ENCODE measurements at regions of chr2 and their contacts with region 1.

Region 1: GRCh38 chr2:3571284-3571683 is 3.8 kb upstream of the RPS7 start:
- DNase-seq: no peak
- H3K4me3 ChIP-seq: no peak overlapping the region
- H3K27ac ChIP-seq: no peak overlapping the region
- H3K4me1 ChIP-seq: peaks cover 0 to 6% of the 10 kb centered on the region in 2 donors
- H3K27me3 ChIP-seq: no peaks in the 10 kb centered on the region
- CTCF ChIP-seq: no peak
- POLR2A ChIP-seq: no peak

Region 2: GRCh38 chr2:3449086-3449485 is 122.2 kb before region 1 on chr2:
- intact Hi-C with region 1: no loop called
- DNase-seq: peak in 1 of 7 donors; percentile 49
- H3K4me3 ChIP-seq: no peak overlapping the region
- H3K27ac ChIP-seq: peak overlapping the region in 2 of 5 donors; percentile 48 to 57
- H3K4me1 ChIP-seq: peaks cover 0 to 4% of the 10 kb centered on the region in 2 donors
- H3K27me3 ChIP-seq: no peaks in the 10 kb centered on the region
- CTCF ChIP-seq: no peak
- POLR2A ChIP-seq: no peak

Region 3: GRCh38 chr2:3518496-3519254 is 52.6 kb before region 1 on chr2:
- intact Hi-C with region 1: loop called in 1 of 2 experiments (anchors 5 kb)
- DNase-seq: peak; percentile 97 to 99 (median 99)
- H3K4me3 ChIP-seq: peak overlapping the region; percentile 69 to 97 (median 78)
- H3K27ac ChIP-seq: peak overlapping the region; percentile 93 to 98 (median 97)
- H3K4me1 ChIP-seq: peaks cover 2 to 29% of the 10 kb centered on the region in 2 donors
- H3K27me3 ChIP-seq: no peaks in the 10 kb centered on the region
- CTCF ChIP-seq: no peak
- POLR2A ChIP-seq: peak; percentile 72 to 82